Activated T-helper 1 cell treated with anti-CD3 and anti-CD28 coated beads, Interleukin-12 subunit alpha, Interleukin-12 subunit beta, Interleukin-2, Interleukin-4 antibody, amounts not matched to agents 30 ng/mL and 10 ng/mL and 1 ng/mL, durations not matched to agents 14 hours and 24 hours and 36 hours (primary cell): ENCODE measurements at regions of chr1 and their contacts with region 1.

Region 1: DNA sequence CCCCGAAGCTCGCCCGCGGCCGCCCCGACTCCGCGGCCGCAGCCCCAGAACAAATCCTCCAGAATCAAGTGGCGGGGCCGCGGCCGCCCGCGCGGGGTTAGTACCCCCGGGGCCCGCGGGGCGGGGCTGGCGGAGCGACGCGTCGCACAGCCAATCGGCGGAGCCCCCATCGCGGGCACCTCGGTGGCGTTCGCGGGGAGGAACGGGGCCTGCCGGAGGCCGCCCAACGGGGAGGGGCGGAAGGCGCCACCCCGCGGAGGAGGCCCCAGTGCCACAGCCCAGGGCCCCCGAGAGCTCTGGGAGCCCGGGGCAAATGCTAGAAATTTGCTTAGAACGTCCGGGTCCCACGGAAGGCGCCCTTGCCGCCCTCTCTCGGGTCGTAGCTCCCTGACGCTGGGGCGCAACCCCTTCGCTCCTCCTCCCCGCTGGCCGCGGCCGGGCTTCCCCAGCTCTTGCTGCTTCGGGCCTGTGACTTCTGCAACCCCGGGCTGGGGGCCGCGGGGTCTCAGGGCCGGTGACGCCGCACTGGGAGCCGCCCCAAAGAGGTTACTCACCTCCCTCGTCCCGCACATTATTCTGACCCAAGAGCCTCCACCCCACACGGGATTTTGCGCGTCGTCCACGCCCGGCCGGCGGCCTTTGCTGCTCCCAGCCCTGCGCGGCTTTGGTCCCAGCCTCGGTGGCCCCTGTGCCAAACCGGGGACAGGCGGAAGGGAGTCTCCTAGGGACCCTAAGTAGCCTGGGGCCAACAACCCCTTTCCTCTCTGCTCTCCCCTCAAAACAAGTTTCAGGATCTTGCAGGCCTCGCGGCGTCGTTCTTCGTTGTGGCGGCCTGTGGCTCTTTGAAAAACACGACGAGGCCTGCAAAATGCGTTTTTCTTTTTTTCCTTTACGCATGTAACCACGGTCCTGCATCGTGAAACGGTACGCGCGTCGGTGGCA is at the start of gene RUNX3:
- DNase-seq: peak; percentile 89
- H3K4me3 Mint-ChIP-seq: peak within 1 kb of the TSS; percentile 95
- H3K27ac Mint-ChIP-seq: peak within 1 kb of the TSS; percentile 92
- H3K4me1 Mint-ChIP-seq: peaks cover 71% of the 10 kb centered on the region
- H3K27me3 Mint-ChIP-seq: no peaks in the 10 kb centered on the region
- total RNA-seq, gene RUNX3: 133 and 140 TPM in 2 replicates

Region 2: GRCh38 chr1:23691499-23692307 is 1238.8 kb before region 1 on chr1 and contains the start of gene RPL11:
- intact Hi-C with region 1: no loop called
- DNase-seq: peak; percentile 82
- H3K4me3 Mint-ChIP-seq: peak within 1 kb of the TSS; percentile 97
- H3K27ac Mint-ChIP-seq: peak within 1 kb of the TSS; percentile 90
- H3K4me1 Mint-ChIP-seq: peaks cover 45% of the 10 kb centered on the region
- H3K27me3 Mint-ChIP-seq: no peaks in the 10 kb centered on the region
- total RNA-seq, gene RPL11: 1,058 and 1,119 TPM in 2 replicates

Region 3: DNA sequence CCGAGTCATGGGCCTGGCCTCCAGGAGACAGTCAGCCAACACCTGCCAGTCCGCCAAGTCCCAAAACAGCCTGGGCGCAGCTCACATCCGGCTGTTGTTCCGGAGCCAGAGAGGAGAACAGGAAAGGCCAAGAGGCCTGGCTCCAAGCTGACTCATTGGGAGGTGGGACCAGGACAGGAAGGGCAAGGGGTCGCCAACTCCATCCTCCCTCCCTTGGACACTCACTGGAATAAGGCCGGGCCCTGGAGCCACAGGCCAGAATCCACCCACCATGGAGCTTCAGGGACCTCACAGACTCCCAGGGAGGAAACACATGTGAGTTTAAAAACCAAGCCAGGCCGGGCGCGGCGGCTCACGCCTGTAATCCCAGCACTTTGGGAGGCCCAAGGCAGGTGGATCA is 210.3 kb before region 1 on chr1:
- intact Hi-C with region 1: no loop called
- DNase-seq: no peak
- H3K4me3 Mint-ChIP-seq: no peak overlapping the region
- H3K27ac Mint-ChIP-seq: no peak overlapping the region
- H3K4me1 Mint-ChIP-seq: peaks cover 14% of the 10 kb centered on the region
- H3K27me3 Mint-ChIP-seq: no peaks in the 10 kb centered on the region

Region 4: DNA sequence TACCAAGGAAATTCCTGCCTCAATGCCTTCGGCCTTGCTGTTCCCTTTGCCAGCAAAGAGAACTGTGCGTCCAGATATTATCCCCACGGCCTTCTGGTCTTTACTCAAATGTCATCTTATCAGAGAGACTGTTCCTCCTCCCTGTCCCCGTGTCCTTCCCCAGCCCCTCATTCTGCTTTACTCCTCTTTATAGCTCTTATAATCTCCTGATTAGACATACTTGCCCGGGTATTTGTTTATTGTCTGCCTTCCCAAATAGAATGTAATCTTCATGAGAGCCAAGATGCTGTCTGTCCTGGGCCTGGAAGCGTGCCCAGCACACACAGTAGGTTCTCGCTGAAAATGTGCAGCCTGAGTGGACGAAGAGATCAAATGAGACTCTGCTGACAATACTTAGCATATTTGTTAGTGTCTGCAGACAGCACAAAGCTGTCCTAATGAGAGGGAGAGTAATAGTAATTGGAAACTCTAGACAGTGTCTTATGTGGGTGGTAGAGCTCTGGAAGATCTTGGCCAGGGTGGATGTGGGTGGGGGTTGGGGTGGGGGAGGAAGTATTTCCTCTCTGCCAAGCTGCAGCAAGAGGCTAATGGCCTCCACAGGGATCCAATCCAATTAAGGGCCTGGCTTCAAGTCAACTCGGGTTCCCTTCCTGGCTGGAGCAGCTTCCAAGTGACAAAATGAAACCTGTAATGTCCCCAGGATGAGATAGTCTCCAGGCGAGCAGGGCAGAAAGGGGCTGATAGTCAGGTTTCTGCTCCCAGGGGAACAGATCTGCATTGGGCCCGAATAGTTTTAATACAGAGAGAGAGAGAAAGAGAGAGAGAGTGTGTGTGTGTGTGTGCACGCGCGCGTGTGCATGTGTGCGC is 194.7 kb before region 1 on chr1:
- intact Hi-C with region 1: no loop called
- DNase-seq: no peak
- H3K4me3 Mint-ChIP-seq: no peak overlapping the region
- H3K27ac Mint-ChIP-seq: peak overlapping the region; percentile 57
- H3K4me1 Mint-ChIP-seq: peaks cover 9% of the 10 kb centered on the region
- H3K27me3 Mint-ChIP-seq: no peaks in the 10 kb centered on the region

Region 5: GRCh38 chr1:24841593-24841992 is 88.9 kb before region 1 on chr1:
- intact Hi-C with region 1: no loop called
- DNase-seq: no peak
- H3K4me3 Mint-ChIP-seq: no peak overlapping the region
- H3K27ac Mint-ChIP-seq: no peak overlapping the region
- H3K4me1 Mint-ChIP-seq: no peaks in the 10 kb centered on the region
- H3K27me3 Mint-ChIP-seq: peaks cover 2% of the 10 kb centered on the region

Region 6: GRCh38 chr1:24955161-24955560 is 24.7 kb after region 1 on chr1:
- intact Hi-C with region 1: loop called (anchors 1 kb)
- DNase-seq: peak; percentile 77
- H3K4me3 Mint-ChIP-seq: peak overlapping the region; percentile 76
- H3K27ac Mint-ChIP-seq: peak overlapping the region; percentile 93
- H3K4me1 Mint-ChIP-seq: peaks cover 93% of the 10 kb centered on the region
- H3K27me3 Mint-ChIP-seq: no peaks in the 10 kb centered on the region

Region 7: DNA sequence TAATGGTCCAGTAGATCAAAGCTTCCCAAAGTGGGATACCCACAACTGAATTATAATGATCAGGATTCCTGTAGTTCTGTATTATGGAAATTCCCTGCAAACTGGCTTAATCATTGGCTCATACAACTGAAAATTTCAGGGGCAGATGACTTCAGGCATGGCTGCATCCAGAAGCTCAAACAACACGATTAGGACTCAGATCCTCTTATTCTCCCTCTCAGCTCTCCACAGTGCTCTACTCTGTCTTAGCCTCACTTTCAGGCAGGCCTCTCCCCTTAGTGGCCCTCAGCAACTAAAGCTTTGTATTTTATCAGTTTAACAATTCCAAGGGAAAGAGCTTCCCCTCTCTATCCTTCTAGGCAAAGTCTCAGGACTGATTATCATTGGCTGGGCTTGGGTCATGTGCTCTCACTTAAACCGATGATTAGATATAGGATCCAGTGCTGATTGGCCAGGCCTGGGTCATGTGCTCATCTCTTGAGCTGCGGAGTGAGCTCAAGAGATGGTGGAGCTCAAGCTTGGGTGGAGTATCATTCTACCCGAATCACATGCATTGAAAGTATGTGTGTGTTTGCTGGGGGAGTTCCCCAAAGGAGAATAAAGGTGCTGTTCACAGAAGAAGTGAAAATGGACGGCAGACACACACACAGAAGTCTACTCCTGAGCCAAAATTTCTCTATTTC is 57.5 kb after region 1 on chr1:
- intact Hi-C with region 1: loop called (anchors 2 kb)
- DNase-seq: no peak
- H3K4me3 Mint-ChIP-seq: no peak overlapping the region
- H3K27ac Mint-ChIP-seq: no peak overlapping the region
- H3K4me1 Mint-ChIP-seq: peaks cover 97% of the 10 kb centered on the region
- H3K27me3 Mint-ChIP-seq: no peaks in the 10 kb centered on the region

Region 8: GRCh38 chr1:25099343-25099951 is 169.0 kb after region 1 on chr1:
- intact Hi-C with region 1: loop called (anchors 1 kb)
- DNase-seq: peak; percentile 37
- H3K4me3 Mint-ChIP-seq: peak overlapping the region; percentile 68
- H3K27ac Mint-ChIP-seq: peak overlapping the region; percentile 88
- H3K4me1 Mint-ChIP-seq: peaks cover 84% of the 10 kb centered on the region
- H3K27me3 Mint-ChIP-seq: peaks cover 2% of the 10 kb centered on the region

Region 9: DNA sequence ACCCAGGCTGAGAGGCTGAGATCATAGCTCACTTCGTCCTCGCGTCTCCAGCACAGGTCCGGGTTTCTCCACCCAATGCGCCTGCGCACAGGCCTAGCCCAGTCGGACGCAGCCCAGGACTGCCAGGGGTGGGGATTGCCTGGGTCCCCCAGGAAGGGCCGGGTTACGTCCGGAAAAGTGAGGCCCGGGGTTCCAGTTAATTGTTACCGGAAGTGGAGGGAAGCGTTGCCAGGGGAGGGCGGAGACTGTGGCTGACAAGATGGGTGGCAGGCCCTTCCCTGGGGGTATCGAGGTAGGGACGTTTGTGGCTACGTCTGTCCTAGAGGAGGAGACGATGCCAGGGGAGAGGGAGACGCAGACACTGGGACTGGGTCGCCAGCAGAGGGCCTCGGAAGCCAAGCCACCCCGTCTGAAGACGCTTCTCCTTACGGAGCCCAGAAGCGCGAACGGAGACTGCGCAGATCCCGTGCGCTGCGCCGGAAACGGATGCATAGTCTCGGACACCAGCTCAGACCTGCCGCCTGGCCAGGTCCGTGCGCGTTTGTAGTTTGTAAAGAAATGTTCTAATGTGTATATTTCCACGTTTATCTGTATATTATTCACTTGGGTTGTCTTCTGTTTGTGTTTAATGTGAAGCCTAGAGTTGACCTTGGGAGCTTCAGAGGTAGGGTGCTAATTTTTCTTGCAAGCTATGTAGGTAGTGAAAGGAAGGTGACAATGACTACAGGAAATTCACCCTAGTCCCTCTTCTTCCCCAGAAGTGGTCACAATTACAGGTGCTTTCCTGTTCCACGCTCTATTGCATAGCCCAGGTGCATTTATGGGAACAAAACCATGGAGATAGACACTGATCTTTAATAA is 309.4 kb after region 1 on chr1:
- intact Hi-C with region 1: loop called (anchors 10 kb)
- DNase-seq: peak; percentile 88
- H3K4me3 Mint-ChIP-seq: peak overlapping the region; percentile 83
- H3K27ac Mint-ChIP-seq: peak overlapping the region; percentile 91
- H3K4me1 Mint-ChIP-seq: peaks cover 63% of the 10 kb centered on the region
- H3K27me3 Mint-ChIP-seq: no peaks in the 10 kb centered on the region